ENCODE measurements at regions of chr5 and their contacts with region 1.

Region 1: DNA sequence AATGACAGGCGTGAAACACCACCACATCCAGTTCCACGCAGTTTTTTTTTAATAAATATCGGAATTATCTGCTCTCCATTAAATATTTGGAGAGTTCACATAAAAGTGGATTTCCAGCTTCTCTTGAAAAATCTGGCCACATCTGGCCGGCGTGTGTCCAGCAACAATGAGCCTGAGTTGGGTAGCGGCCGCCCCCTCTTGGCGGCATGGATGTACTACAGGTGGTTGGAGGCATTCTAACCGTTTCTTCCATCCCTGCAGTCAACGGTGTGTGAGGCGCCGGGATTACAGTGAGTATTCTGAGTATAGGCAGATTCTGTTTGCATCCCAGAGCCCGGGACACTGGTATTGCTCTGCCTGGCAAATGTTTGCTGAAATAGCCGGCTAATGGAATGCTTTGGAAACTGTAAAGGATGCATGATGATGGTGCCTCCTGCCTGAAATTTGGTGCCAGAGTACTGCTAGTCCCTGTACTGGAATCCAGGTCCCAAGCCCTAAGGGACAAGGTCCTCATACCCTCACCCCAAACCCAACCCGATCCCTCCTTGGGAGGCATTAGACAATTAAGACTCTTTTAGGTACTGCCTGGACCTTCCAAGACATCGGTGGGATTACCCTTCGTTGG is 13.6 kb upstream of the GM2A start:
- DNase-seq: peak in 4 of 5 donors; percentile 40 to 60 (median 48)
- H3K4me3 ChIP-seq: no peak overlapping the region
- H3K4me3 Mint-ChIP-seq: no peak overlapping the region
- H3K27ac ChIP-seq: no peak overlapping the region
- H3K27ac Mint-ChIP-seq: peak overlapping the region in 3 of 7 donors; percentile 35 to 81 (median 61)
- H3K4me1 ChIP-seq: peaks cover 28% of the 10 kb centered on the region
- H3K4me1 Mint-ChIP-seq: peaks cover 17 to 24% (median 18%) of the 10 kb centered on the region in 4 donors
- H3K27me3 ChIP-seq: no peaks in the 10 kb centered on the region
- H3K27me3 Mint-ChIP-seq: no peaks in the 10 kb centered on the region

Region 2: GRCh38 chr5:150582241-150583109 is 656.9 kb before region 1 on chr5:
- CTCF ChIA-PET with region 1: no interaction called
- POLR2A ChIA-PET with region 1: no interaction called
- intact Hi-C with region 1: no loop called
- DNase-seq: no peak
- H3K4me3 ChIP-seq: no peak overlapping the region
- H3K4me3 Mint-ChIP-seq: no peak overlapping the region
- H3K27ac ChIP-seq: no peak overlapping the region
- H3K27ac Mint-ChIP-seq: no peak overlapping the region
- H3K4me1 ChIP-seq: no peaks in the 10 kb centered on the region
- H3K4me1 Mint-ChIP-seq: no peaks in the 10 kb centered on the region
- H3K27me3 ChIP-seq: no peaks in the 10 kb centered on the region
- H3K27me3 Mint-ChIP-seq: peaks cover 4 to 6% of the 10 kb centered on the region in 2 donors

Region 3: DNA sequence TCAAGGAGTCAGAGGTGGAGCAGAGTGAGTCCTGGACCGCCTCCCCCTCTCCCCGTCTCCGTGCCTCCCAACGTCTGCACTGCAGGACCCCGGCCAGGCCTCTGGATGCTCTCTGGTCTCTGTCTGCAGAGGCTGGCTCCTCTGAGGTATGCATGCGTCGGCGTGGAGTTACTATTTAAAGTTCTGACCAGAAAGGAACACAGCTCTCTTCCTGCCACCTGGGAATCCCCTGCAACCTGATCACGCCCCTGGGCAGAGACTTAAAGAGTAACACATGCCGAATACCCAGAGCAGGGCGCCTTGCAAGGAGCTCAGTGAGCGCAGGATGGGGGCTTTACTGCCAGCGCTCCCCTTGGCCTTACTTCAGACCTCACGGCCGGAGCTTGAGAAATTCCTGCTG is 97.8 kb before region 1 on chr5:
- CTCF ChIA-PET with region 1: interaction called, 12 read pairs
- POLR2A ChIA-PET with region 1: no interaction called
- intact Hi-C with region 1: no loop called
- DNase-seq: peak; percentile 47 to 84 (median 58)
- H3K4me3 ChIP-seq: peak overlapping the region in 1 of 2 donors; percentile 23
- H3K4me3 Mint-ChIP-seq: peak overlapping the region; percentile 71 to 91 (median 84)
- H3K27ac ChIP-seq: peak overlapping the region; percentile 68
- H3K27ac Mint-ChIP-seq: peak overlapping the region; percentile 90 to 97 (median 94)
- H3K4me1 ChIP-seq: peaks cover 91% of the 10 kb centered on the region
- H3K4me1 Mint-ChIP-seq: peaks cover 75 to 100% (median 94%) of the 10 kb centered on the region in 4 donors
- H3K27me3 ChIP-seq: no peaks in the 10 kb centered on the region
- H3K27me3 Mint-ChIP-seq: no peaks in the 10 kb centered on the region

Region 4: GRCh38 chr5:151174612-151175101 is 64.7 kb before region 1 on chr5:
- CTCF ChIA-PET with region 1: interaction called, 159 read pairs
- POLR2A ChIA-PET with region 1: interaction called, 5 read pairs
- intact Hi-C with region 1: no loop called
- DNase-seq: no peak
- H3K4me3 ChIP-seq: no peak overlapping the region
- H3K4me3 Mint-ChIP-seq: no peak overlapping the region
- H3K27ac ChIP-seq: no peak overlapping the region
- H3K27ac Mint-ChIP-seq: peak overlapping the region in 1 of 7 donors; percentile 89
- H3K4me1 ChIP-seq: peaks cover 8% of the 10 kb centered on the region
- H3K4me1 Mint-ChIP-seq: peaks cover 17 to 19% (median 18%) of the 10 kb centered on the region in 4 donors
- H3K27me3 ChIP-seq: no peaks in the 10 kb centered on the region
- H3K27me3 Mint-ChIP-seq: no peaks in the 10 kb centered on the region

Region 5: GRCh38 chr5:151183451-151184245 is 55.7 kb before region 1 on chr5:
- CTCF ChIA-PET with region 1: interaction called, 16 read pairs
- POLR2A ChIA-PET with region 1: interaction called, 3 read pairs
- intact Hi-C with region 1: no loop called
- DNase-seq: no peak
- H3K4me3 ChIP-seq: no peak overlapping the region
- H3K4me3 Mint-ChIP-seq: no peak overlapping the region
- H3K27ac ChIP-seq: no peak overlapping the region
- H3K27ac Mint-ChIP-seq: peak overlapping the region in 4 of 7 donors; percentile 29 to 63 (median 40)
- H3K4me1 ChIP-seq: no peaks in the 10 kb centered on the region
- H3K4me1 Mint-ChIP-seq: peaks cover 8 to 11% (median 10%) of the 10 kb centered on the region in 4 donors
- H3K27me3 ChIP-seq: no peaks in the 10 kb centered on the region
- H3K27me3 Mint-ChIP-seq: no peaks in the 10 kb centered on the region

Region 6: DNA sequence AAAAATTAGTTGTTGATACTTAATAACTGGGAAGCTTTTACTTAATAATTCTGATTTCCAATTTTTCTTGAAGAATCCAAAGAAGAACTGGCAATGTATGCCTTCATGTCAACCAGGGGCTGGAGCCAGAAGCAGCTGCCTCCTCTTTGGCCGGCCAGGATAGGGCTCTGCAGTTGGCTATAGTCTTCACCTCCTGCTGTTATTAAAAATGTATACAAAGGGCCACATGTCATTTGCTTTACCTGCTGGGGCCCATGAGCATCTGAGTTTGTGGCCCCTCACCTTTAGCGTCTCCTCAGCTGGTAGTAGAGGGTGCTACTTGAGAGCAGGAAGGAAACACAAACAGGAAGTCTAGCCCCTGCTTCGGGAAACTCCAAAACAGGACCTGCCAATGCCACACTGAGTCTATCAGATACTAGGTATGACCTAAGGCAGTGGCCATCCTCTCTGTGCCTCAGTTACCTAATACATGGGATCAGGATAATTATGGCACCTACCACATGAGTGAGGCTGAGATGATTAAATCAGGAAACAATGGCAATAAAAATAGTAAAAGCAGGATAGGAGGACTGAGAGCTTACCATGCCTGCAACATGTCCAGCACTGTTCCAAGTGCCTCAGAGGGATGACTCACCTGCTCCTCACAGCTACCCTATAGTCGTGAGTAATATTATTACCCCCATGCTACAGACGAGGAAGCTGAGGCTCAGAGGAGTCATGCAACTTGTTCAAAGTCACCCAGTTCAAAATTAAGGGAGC is 36.8 kb before region 1 on chr5:
- CTCF ChIA-PET with region 1: interaction called, 22 read pairs
- POLR2A ChIA-PET with region 1: interaction called, 5 read pairs
- intact Hi-C with region 1: loop called (anchors 5 kb)
- DNase-seq: peak in 1 of 5 donors; percentile 74
- H3K4me3 ChIP-seq: no peak overlapping the region
- H3K4me3 Mint-ChIP-seq: peak overlapping the region in 7 of 8 donors; percentile 28 to 76 (median 55)
- H3K27ac ChIP-seq: peak overlapping the region; percentile 25
- H3K27ac Mint-ChIP-seq: peak overlapping the region; percentile 85 to 93 (median 90)
- H3K4me1 ChIP-seq: peaks cover 32% of the 10 kb centered on the region
- H3K4me1 Mint-ChIP-seq: peaks cover 25 to 46% (median 33%) of the 10 kb centered on the region in 4 donors
- H3K27me3 ChIP-seq: no peaks in the 10 kb centered on the region
- H3K27me3 Mint-ChIP-seq: no peaks in the 10 kb centered on the region

Region 7: GRCh38 chr5:151378616-151379015 is 139.3 kb after region 1 on chr5:
- CTCF ChIA-PET with region 1: no interaction called
- POLR2A ChIA-PET with region 1: no interaction called
- intact Hi-C with region 1: no loop called
- DNase-seq: no peak
- H3K4me3 ChIP-seq: no peak overlapping the region
- H3K4me3 Mint-ChIP-seq: no peak overlapping the region
- H3K27ac ChIP-seq: no peak overlapping the region
- H3K27ac Mint-ChIP-seq: no peak overlapping the region
- H3K4me1 ChIP-seq: no peaks in the 10 kb centered on the region
- H3K4me1 Mint-ChIP-seq: no peaks in the 10 kb centered on the region
- H3K27me3 ChIP-seq: no peaks in the 10 kb centered on the region
- H3K27me3 Mint-ChIP-seq: peaks cover 0 to 3% of the 10 kb centered on the region in 2 donors

Measured in CD4-positive, alpha-beta memory T cell (primary cell).